PC-9 (cell line): ENCODE measurements at regions of chr13 and their contacts with region 1.

Region 1: GRCh38 chr13:44988973-44989817 is at the starts of genes GPALPP1 and NUFIP1:
- DNase-seq: peak; percentile 84 to 92
- H3K4me3 ChIP-seq: peak within 1 kb of the TSS; percentile 97
- H3K27ac ChIP-seq: peak within 1 kb of the TSS; percentile 73
- H3K4me1 ChIP-seq: peaks cover 18% of the 10 kb centered on the region
- H3K27me3 ChIP-seq: no peaks in the 10 kb centered on the region
- CTCF ChIP-seq: peak; percentile 32; the same call in 1 of the 2 replicates
- total RNA-seq, gene GPALPP1: 36.4 and 42.2 TPM in 2 replicates
- total RNA-seq, gene NUFIP1: 6.7 and 7.3 TPM in 2 replicates

Region 2: GRCh38 chr13:45310341-45311125 is 321.3 kb after region 1 on chr13:
- CTCF ChIA-PET with region 1: interaction called, 6 read pairs
- POLR2A ChIA-PET with region 1: no interaction called
- intact Hi-C with region 1: loop called (anchors 5 kb)
- DNase-seq: no peak
- H3K4me3 ChIP-seq: peak overlapping the region; percentile 43; the same call in 1 of the 2 replicates
- H3K27ac ChIP-seq: no peak overlapping the region
- H3K4me1 ChIP-seq: peaks cover 15% of the 10 kb centered on the region
- H3K27me3 ChIP-seq: no peaks in the 10 kb centered on the region
- CTCF ChIP-seq: no peak